Endothelial cell of umbilical vein (primary cell): ENCODE measurements at regions of chr6 and their contacts with region 1.

Region 1: DNA sequence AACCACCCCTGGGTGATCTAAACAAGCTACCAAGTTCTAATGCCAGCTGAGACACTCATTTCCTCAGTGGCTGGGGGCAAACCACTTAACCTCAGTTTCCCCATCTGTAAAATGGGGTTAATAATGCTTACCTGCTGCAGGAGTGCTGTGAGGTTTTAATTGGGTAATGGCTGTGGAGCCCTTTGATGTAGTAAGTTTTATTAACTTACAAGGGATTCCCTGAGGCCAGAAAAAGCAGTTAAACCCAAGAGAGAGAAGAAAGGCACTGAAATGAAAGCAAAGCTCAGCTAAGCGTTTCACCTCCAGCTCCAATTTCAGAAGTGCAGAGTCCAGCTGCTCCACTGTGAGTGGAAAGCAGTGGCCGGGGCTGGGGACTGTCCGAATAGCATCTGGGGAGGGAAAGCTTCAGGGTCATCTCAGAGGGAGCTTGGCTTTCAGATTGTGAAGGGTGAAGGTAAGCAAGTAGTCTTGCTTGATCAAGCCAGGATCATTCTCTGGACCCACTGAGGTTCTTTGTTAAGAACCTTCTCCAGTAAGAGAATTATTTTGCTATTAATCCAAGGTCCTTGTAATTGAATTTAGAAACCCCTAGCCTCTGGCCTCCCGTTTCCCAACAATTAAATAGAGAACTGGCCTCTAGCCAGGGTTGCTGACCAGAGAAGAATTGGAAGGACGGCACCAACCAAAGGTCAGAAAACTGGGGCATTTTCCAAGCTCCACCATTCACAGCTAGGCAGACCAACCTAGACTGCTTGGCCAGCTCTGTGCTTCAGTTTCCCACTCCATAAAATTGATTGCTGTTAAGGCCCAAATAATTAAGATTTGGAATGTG is 20.9 kb upstream of the TCP11 start:
- DNase-seq: peak; percentile 41
- H3K4me3 ChIP-seq: no peak overlapping the region
- H3K27ac ChIP-seq: no peak overlapping the region
- H3K4me1 ChIP-seq: peaks cover 18% of the 10 kb centered on the region
- H3K27me3 ChIP-seq: no peaks in the 10 kb centered on the region
- CTCF ChIP-seq: no peak
- POLR2A ChIP-seq: no peak

Region 2: GRCh38 chr6:35128496-35128895 is 33.5 kb before region 1 on chr6:
- CTCF ChIA-PET with region 1: no interaction called
- POLR2A ChIA-PET with region 1: no interaction called
- dilution Hi-C with region 1: no loop called
- intact Hi-C with region 1: no loop called
- DNase-seq: no peak
- H3K4me3 ChIP-seq: no peak overlapping the region
- H3K27ac ChIP-seq: no peak overlapping the region
- H3K4me1 ChIP-seq: no peaks in the 10 kb centered on the region
- H3K27me3 ChIP-seq: peaks cover 10 to 13% of the 10 kb centered on the region in 2 experiments
- CTCF ChIP-seq: no peak
- POLR2A ChIP-seq: no peak

Region 3: DNA sequence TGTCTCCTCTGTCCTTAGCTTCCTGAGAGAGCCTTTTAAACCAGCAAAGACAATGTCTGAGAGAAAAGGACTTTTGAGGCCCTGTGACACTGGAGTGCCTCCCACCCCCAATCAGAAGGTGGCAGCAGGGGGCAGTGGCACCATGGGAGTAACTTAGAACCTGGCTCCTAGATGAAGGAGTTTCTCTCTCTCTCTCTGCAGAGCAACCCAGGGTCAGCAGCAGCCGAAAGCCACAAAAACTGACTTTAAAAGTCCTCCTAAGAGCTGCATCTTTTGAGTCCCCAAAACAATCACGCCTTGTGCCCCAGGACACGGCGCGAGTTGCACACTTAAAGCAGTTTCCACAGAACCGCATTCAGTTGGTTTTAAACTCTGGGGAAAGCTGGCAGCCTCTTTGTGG is 15.5 kb before region 1 on chr6:
- CTCF ChIA-PET with region 1: interaction called, 23 read pairs
- POLR2A ChIA-PET with region 1: no interaction called
- dilution Hi-C with region 1: no loop called
- intact Hi-C with region 1: no loop called
- DNase-seq: peak; percentile 47
- H3K4me3 ChIP-seq: no peak overlapping the region
- H3K27ac ChIP-seq: no peak overlapping the region
- H3K4me1 ChIP-seq: peaks cover 11% of the 10 kb centered on the region
- H3K27me3 ChIP-seq: no peaks in the 10 kb centered on the region
- CTCF ChIP-seq: peak; percentile 51 to 70
- POLR2A ChIP-seq: no peak

Region 4: GRCh38 chr6:35173427-35174087 is 11.6 kb after region 1 on chr6:
- CTCF ChIA-PET with region 1: interaction called, 10 read pairs
- POLR2A ChIA-PET with region 1: no interaction called
- dilution Hi-C with region 1: no loop called
- intact Hi-C with region 1: no loop called
- DNase-seq: no peak
- H3K4me3 ChIP-seq: no peak overlapping the region
- H3K27ac ChIP-seq: no peak overlapping the region
- H3K4me1 ChIP-seq: no peaks in the 10 kb centered on the region
- H3K27me3 ChIP-seq: peaks cover 2 to 3% of the 10 kb centered on the region in 2 experiments
- CTCF ChIP-seq: no peak
- POLR2A ChIP-seq: no peak

Region 5: GRCh38 chr6:35544523-35545313 is 382.7 kb after region 1 on chr6:
- CTCF ChIA-PET with region 1: no interaction called
- POLR2A ChIA-PET with region 1: no interaction called
- dilution Hi-C with region 1: no loop called
- intact Hi-C with region 1: no loop called
- DNase-seq: no peak
- H3K4me3 ChIP-seq: no peak overlapping the region
- H3K27ac ChIP-seq: no peak overlapping the region
- H3K4me1 ChIP-seq: no peaks in the 10 kb centered on the region
- H3K27me3 ChIP-seq: peaks cover 3 to 9% of the 10 kb centered on the region in 2 experiments
- CTCF ChIP-seq: no peak
- POLR2A ChIP-seq: no peak